Right ventricle myocardium superior (tissue), 1 donor: ENCODE measurements at regions of chr3 and their contacts with region 1.

Region 1: DNA sequence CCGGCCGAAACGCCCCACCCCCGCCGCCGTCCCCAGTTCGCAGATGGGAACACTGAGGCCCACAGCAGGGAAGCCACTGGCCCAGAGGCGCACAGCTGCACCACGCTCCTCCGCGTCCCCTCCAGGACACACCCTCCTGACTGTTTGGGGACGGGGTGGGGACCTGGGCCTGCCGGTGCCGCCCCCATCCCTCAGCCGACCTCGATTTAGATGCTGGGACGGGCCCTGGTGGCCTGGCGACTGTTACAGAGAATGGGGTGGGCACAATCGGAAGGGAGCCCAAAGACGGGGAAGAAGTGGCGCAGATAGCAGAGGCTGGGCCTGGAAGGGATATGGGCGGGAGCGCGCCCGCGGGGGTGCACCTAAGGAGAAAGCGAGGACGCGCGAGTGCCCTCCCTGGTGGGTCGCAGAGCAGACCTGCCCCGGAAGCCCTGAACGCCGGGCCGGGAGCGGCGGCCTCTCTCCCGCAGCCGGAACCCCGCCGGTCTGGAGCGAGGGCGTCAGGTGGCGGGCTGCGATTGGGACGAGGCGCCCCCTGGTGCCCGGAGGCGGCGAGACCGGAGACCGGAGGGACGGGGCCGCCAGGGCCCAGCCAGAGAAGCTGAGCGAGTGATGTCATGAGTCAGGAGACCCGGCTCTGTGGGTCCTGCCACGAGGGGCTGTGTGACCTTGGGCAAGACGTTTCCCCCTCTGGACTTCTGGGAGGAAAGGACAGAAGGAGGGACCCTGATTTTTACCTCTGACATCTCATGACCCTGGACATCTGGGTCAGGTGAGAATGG is 78.4 kb downstream of the IQSEC1 start:
- DNase-seq: peak; percentile 93
- ATAC-seq: peak; percentile 80

Region 2: GRCh38 chr3:12868039-12869034 is 126.5 kb before region 1 on chr3:
- intact Hi-C with region 1: loop called (anchors 5 kb)
- DNase-seq: peak; percentile 91
- ATAC-seq: peak; percentile 96